Astrocyte of the cerebellum (primary cell): ENCODE measurements at regions of chr17 and their contacts with region 1.

Region 1: DNA sequence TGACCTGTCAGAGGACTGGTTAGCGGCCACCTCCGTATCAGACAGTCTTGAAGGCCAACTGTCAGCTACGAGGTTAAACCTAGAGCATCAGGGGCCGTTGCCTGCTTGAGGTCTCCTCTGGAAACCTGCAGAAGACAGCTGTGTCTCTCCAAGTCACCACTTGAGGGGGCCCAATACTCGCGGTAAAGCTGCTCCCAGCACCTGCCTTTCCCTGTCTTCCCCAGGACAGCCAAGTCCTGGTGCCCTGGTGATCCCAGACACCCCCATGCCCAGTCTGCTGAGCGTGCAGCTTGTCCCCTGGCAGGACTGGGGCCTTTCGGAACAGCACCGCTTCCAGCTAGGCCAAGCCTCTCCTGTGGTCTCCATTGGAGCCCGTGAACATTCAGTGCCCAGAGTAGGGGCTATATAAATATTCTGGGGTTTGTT is 80.1 kb downstream of the DNAH17 start:
- DNase-seq: peak; percentile 51
- H3K4me3 ChIP-seq: no peak overlapping the region
- CTCF ChIP-seq: peak; percentile 76

Region 2: DNA sequence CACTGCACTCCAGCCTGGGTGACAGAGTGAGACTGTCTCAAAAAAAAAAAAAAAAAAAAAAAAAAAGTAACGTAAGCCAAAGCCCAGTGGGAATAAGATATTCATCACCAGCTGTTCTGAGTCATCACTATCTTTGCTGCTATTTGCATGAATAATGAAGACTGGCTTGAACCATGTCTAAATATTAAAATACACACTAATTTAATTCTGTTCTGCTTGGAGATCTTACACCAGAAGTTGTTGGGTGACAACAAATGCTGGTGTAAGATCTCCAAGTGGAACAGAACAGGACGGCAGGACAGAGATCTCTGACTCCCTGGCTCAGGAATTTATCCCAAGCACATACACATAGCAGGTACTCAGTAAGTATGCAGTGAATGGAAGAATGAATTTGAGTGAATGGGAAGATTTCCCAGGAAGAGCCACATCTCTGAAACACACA is 60.5 kb after region 1 on chr17:
- in situ Hi-C with region 1: no loop called
- DNase-seq: peak; percentile 15
- H3K4me3 ChIP-seq: no peak overlapping the region
- CTCF ChIP-seq: no peak

Region 3: GRCh38 chr17:78600181-78600721 is 103.1 kb after region 1 on chr17:
- in situ Hi-C with region 1: loop called (anchors 25 kb)
- DNase-seq: peak; percentile 8
- H3K4me3 ChIP-seq: no peak overlapping the region
- CTCF ChIP-seq: no peak

Region 4: GRCh38 chr17:78840725-78841611 is 343.8 kb after region 1 on chr17 and contains the start of gene USP36:
- in situ Hi-C with region 1: loop called (anchors 25 kb)
- DNase-seq: peak; percentile 98
- H3K4me3 ChIP-seq: peak within 1 kb of the TSS; percentile 71
- CTCF ChIP-seq: no peak